H1 (cell line): ENCODE measurements at regions of chr2 and their contacts with region 1.

Region 1: GRCh38 chr2:237474931-237475703 is 11.9 kb upstream of the MLPH start:
- DNase-seq: peak in 1 of 2 experiments; percentile 97
- H3K4me3 ChIP-seq: peak overlapping the region; percentile 53 to 96 (median 64)
- H3K27ac ChIP-seq: peak overlapping the region; percentile 61; the same call in 1 of the 2 replicates
- H3K4me1 ChIP-seq: peaks cover 0 to 13% (median 7%) of the 10 kb centered on the region in 4 experiments; a peak in 4 of 7 replicates
- H3K27me3 ChIP-seq: peaks cover 0 to 7% (median 7%) of the 10 kb centered on the region in 4 experiments; a peak in 3 of 7 replicates
- CTCF ChIP-seq: peak; percentile 63 to 90 (median 77)
- EP300 ChIP-seq: no peak
- POLR2A ChIP-seq: peak in 1 of 2 experiments; percentile 59; a peak in 1 of 3 replicates
- RAD21 ChIP-seq: peak; percentile 46 to 70; a peak in 3 of 4 replicates

Region 2: GRCh38 chr2:237500681-237501424 is 25.7 kb after region 1 on chr2:
- CTCF ChIA-PET with region 1: interaction called, 16 read pairs
- POLR2A ChIA-PET with region 1: no interaction called
- DNase-seq: peak in 1 of 2 experiments; percentile 53
- H3K4me3 ChIP-seq: no peak overlapping the region
- H3K27ac ChIP-seq: no peak overlapping the region
- H3K4me1 ChIP-seq: peaks cover 0 to 4% (median 0%) of the 10 kb centered on the region in 4 experiments; a peak in 5 of 7 replicates
- H3K27me3 ChIP-seq: no peaks in the 10 kb centered on the region
- CTCF ChIP-seq: no peak
- EP300 ChIP-seq: no peak
- POLR2A ChIP-seq: no peak
- RAD21 ChIP-seq: no peak